Mammary epithelial cell (primary cell): ENCODE measurements at regions of chr17 and their contacts with region 1.

Region 1: DNA sequence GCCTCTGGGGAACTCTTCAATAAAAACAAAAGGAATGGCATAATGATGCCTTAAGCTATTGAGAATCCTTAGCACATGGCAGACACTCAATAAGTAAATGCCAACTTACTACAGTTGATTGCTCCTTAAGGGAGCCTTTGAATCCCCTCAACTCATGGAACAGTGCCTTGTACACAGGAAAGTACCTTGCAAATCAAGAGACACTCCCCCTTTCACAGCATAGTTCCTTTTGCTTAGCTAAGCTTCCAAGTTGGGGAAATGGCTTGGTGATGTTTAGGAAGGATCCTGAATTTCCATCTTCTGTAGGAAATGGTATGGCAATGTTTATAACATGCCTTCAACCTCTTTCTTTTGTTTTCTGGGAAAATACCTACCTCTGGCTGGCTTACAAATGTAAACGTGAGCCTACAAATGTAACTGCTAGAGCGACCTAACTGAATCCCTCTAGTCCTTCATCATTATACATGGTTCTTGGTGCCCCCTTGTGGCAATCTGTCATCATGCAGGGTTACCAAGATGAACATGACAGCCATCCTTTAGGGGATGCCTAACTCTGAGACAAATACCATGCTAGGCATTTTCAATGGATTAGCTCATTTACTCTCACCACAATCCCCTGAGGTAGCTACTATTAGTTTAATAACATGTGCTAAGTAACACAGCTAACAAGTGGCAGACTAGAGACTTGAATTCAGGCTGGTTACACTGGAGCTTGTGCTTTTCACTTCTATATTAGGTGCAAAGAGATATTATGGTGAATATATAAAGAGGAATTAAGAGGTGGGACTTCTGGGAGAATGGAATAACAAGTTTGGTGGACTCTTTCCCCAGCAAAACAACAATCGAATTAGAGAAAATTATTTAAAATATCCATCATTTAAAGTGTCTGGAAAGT is 65.0 kb downstream of the MMD start:
- DNase-seq: peak; percentile 58
- H3K4me3 ChIP-seq: no peak overlapping the region
- H3K27ac ChIP-seq: no peak overlapping the region
- H3K4me1 ChIP-seq: no peaks in the 10 kb centered on the region
- H3K27me3 ChIP-seq: no peaks in the 10 kb centered on the region
- CTCF ChIP-seq: peak; percentile 79 to 84

Region 2: DNA sequence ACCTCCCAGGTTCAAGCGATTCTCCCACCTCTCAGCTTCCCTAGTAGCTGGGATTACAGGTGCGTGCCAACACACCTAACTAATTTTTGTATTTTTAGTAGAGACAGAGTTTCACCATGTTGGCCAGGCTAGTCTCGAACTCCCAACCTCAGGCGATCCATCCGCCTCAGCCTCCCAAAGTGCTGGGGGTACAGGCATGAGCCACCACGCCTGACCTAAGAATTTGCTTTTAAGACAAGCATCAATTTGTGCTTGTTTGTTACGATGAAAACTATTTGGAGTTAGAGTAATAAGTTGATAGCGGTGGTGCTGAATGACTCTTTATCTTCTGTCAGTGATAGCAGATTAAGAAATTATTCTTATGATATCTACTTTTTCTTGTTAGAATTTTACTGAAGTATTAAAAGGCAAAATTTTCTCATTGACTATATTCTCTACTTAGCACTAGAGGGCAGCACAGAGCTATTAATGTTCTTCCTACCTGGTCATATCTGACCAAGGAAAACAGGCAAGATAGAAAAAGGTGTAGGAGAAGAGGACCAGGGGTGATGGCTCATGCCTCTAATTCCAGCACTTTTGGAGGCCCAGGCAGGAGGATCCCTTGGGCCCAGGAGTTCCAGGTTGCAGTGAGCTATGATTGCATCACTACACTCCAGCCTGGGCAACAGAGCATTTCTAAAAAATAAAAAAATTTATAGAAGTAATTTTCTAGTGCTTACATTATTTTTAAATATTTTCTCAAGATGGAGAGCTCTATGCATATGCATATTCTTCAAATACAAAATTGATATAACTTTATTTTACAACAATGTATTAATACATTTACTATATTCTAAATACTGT is 363.7 kb before region 1 on chr17:
- CTCF ChIA-PET with region 1: interaction called, 4 read pairs
- dilution Hi-C with region 1: no loop called
- in situ Hi-C with region 1: loop called in 1 of 2 experiments (anchors 10 kb)
- intact Hi-C with region 1: no loop called
- DNase-seq: peak; percentile 30
- H3K4me3 ChIP-seq: no peak overlapping the region
- H3K27ac ChIP-seq: no peak overlapping the region
- H3K4me1 ChIP-seq: no peaks in the 10 kb centered on the region
- H3K27me3 ChIP-seq: no peaks in the 10 kb centered on the region
- CTCF ChIP-seq: peak; percentile 57 to 58

Region 3: GRCh38 chr17:55407641-55408566 is 51.2 kb after region 1 on chr17:
- CTCF ChIA-PET with region 1: no interaction called
- dilution Hi-C with region 1: loop called (anchors 5 kb)
- in situ Hi-C with region 1: no loop called
- intact Hi-C with region 1: no loop called
- DNase-seq: no peak
- H3K4me3 ChIP-seq: no peak overlapping the region
- H3K27ac ChIP-seq: no peak overlapping the region
- H3K4me1 ChIP-seq: no peaks in the 10 kb centered on the region
- H3K27me3 ChIP-seq: no peaks in the 10 kb centered on the region
- CTCF ChIP-seq: no peak

Region 4: DNA sequence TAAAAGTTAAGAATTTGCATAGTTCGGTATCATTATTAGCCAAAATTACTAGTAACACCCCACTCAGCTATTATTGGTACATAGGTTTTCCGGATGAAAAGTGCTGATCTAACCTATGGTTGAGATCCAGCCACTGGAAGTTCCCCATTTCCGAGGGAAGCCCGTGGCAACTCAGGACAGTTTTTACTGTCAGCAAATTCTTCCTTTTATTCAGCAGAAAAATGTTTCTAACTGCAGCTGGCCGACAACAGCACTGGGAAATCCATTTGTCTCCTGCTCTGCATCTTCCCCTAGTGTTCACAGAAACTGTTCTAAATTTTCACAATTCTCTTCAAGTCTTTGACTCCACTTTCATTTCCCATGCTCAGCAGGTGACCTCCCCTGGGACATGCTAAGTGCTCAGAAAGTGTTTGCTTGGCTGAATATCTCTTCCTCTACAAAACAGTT is 80.5 kb after region 1 on chr17:
- CTCF ChIA-PET with region 1: no interaction called
- dilution Hi-C with region 1: no loop called
- in situ Hi-C with region 1: no loop called
- intact Hi-C with region 1: loop called (anchors 2 kb)
- DNase-seq: no peak
- H3K4me3 ChIP-seq: no peak overlapping the region
- H3K27ac ChIP-seq: no peak overlapping the region
- H3K4me1 ChIP-seq: peaks cover 46% of the 10 kb centered on the region
- H3K27me3 ChIP-seq: no peaks in the 10 kb centered on the region
- CTCF ChIP-seq: no peak

Region 5: GRCh38 chr17:55513885-55514591 is 157.4 kb after region 1 on chr17:
- CTCF ChIA-PET with region 1: interaction called, 4 read pairs
- dilution Hi-C with region 1: loop called (anchors 5 kb)
- in situ Hi-C with region 1: loop called (anchors 5 to 10 kb)
- intact Hi-C with region 1: loop called (anchors 1 kb)
- DNase-seq: peak; percentile 60
- H3K4me3 ChIP-seq: no peak overlapping the region
- H3K27ac ChIP-seq: no peak overlapping the region
- H3K4me1 ChIP-seq: no peaks in the 10 kb centered on the region
- H3K27me3 ChIP-seq: no peaks in the 10 kb centered on the region
- CTCF ChIP-seq: peak; percentile 94 to 96

Region 6: GRCh38 chr17:55625521-55625920 is 268.8 kb after region 1 on chr17:
- CTCF ChIA-PET with region 1: no interaction called
- dilution Hi-C with region 1: no loop called
- in situ Hi-C with region 1: no loop called
- intact Hi-C with region 1: no loop called
- DNase-seq: no peak
- H3K4me3 ChIP-seq: no peak overlapping the region
- H3K27ac ChIP-seq: no peak overlapping the region
- H3K4me1 ChIP-seq: no peaks in the 10 kb centered on the region
- H3K27me3 ChIP-seq: no peaks in the 10 kb centered on the region
- CTCF ChIP-seq: no peak